ENCODE measurements at regions of chr1 and their contacts with region 1.

Region 1: DNA sequence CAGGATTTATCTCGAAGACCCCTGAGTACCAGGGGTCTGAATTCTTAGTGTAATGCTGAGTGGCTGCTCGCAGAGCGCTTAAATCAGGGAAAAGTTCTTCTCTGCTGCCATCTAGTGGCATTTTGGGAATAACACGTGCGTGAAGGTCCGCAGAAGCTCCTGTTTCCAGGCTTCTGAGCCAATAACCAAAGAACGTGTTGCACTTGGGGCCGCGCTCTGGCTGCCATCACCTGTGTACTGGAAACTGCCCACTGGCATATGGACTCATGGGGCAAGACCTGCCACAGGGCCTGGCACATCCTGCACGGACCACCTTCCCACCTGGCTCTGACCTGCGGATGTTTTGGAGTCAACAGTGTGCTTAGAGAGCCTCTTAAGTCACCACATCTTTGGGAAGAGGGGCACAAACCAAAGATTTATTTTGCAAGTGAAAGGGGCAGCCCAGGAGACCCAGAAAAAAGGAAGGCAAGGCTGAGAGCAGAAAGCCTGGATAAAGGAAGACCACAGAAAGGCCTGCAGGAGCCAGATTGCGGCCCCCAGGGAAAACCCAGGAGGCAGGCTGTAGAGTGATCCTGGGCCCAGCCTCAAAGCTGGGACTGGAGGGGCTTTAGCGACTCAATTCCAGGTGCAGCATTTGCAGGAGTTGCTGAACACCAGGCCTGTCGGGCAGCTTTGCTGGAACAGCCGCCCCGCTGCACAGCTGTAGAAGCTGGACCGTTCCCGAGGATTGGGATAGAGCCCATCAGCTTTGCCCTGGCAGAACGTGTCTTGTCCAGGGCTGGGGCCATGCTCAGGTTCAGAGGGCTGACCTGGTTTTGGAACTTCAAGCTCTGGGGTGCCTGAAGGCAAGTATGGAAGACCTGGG is 13.0 kb downstream of the CHIT1 start:
- DNase-seq: peak; percentile 77

Region 2: GRCh38 chr1:203026031-203026989 is 190.2 kb before region 1 on chr1 and contains the start of gene PPFIA4:
- in situ Hi-C with region 1: loop called (anchors 25 kb)
- DNase-seq: peak; percentile 88

Region 3: DNA sequence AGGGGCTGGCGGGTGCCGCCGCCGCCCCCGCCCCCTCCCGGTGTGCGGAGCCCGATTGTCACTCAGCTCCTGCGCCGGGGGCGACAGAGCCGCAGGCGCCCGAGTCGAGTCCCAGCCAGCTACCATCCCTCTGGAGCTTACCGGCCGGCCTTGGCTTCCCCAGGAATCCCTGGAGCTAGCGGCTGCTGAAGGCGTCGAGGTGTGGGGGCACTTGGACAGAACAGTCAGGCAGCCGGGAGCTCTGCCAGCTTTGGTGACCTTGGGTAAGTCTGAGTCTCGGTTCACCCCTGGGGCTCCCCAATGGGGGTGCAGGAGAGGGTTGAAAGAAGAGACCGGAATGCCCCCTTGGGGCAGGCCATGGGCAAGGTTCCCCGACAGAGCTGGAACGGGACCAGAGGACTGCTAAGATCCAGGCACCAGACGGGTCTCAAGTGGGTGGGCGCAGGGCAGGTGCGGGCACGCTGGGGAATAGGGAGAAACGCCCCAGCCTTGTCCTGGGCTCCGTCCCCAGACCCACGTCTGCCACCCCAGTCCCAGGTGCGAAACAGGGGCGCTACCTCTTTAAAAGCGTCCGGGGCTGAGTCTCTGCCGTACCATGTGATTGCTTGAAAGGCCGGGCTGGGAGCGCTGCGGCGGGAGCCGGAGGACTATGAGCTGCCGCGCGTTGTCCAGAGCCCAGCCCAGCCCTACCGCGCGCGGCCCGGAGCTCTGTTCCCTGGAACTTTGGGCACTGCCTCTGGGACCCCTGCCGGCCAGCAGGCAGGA is 88.7 kb before region 1 on chr1 and contains the start of gene ADORA1:
- in situ Hi-C with region 1: loop called (anchors 10 kb)
- DNase-seq: peak; percentile 87

Region 4: DNA sequence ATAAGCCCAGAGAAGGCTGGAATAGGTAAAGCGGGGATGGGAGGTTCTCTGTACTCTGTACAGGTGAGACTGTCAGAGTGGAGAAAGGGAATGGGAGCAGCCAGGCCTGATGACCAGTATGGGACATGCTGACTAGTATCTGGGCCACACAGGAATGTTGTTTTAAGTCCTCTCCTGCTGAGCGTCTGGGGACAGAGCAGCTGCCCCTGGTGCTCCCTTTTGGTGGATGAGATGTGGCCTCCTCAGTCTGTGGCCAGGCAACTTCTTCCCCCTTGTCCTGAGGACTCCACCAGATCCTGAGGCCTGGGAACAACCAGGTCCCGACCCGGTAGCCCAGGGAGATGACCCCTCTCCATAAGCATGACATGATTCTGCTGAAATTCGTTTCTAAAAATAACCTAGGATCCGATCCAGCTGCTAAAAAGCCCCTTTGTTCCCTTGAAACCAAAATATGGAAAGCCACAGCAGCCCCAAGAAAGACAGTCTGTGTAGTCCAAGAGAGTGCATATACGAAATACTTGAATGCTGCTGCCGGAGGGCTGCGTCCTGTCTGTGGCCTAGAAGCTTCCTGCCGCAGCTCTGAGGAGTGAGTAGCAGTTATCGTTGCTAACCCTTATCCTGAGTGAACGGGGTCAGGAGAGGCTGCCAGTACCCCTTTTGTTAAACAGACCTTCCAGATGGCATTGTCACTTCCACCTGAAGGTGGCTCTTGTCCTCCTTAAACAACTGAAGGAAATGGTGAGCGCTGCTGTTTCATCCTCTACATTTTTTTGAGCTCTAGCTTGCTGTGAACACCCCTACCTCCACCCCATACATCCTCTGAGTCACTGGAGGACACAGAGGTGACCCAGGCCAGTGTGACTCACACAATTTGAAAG is 457.3 kb after region 1 on chr1:
- in situ Hi-C with region 1: no loop called
- DNase-seq: peak; percentile 89

Measured in ACHN (cell line).